PC-9 (cell line): ENCODE measurements at regions of chr7 and their contacts with region 1.

Region 1: GRCh38 chr7:143299840-143300239 is 11.7 kb downstream of the CASP2 start:
- DNase-seq: peak in 1 of 2 experiments; percentile 49
- H3K4me3 ChIP-seq: no peak overlapping the region
- H3K27ac ChIP-seq: no peak overlapping the region
- H3K4me1 ChIP-seq: no peaks in the 10 kb centered on the region
- H3K27me3 ChIP-seq: no peaks in the 10 kb centered on the region
- CTCF ChIP-seq: peak; percentile 82

Region 2: DNA sequence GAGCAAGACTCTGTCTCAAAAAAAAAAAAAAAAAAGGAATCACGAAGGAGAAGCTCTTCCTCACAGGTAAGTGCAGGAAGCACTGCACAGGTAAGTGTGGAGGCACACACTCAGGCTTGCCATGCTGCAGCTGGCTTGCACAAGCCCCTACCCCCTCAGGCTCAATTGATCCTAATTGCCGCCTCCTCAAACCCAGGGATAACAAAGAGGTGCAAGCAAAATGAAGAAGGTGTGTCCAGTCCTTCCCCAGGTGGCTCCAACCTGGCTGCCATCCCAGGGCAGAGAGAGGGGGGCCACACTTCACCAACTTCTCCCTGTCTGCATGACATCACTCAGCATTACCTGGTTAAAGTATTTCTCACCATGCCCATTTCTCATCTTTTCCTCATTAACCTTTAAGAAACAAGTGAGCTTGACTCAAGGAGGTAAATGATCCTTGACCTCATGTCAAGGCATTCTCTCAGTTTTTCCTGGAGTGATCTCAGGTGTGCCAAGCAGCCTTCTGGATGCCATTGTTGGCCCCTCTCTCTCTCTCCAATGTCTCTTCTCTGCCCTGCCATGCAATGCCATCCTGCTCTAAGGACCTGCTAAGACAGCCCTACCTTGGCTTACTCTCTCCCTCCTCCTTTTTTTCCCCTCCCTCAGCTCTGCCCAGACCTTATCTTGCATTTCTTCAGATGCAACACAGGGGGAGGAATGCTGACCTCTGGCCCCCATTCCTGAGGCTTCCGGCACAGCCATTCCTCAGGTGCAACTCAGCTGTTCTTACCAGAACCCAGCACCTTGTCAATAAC is 401.3 kb before region 1 on chr7:
- CTCF ChIA-PET with region 1: no interaction called
- POLR2A ChIA-PET with region 1: interaction called, 10 read pairs
- intact Hi-C with region 1: no loop called
- DNase-seq: peak; percentile 66 to 68
- H3K4me3 ChIP-seq: no peak overlapping the region
- H3K27ac ChIP-seq: no peak overlapping the region
- H3K4me1 ChIP-seq: peaks cover 28% of the 10 kb centered on the region
- H3K27me3 ChIP-seq: no peaks in the 10 kb centered on the region
- CTCF ChIP-seq: no peak

Region 3: DNA sequence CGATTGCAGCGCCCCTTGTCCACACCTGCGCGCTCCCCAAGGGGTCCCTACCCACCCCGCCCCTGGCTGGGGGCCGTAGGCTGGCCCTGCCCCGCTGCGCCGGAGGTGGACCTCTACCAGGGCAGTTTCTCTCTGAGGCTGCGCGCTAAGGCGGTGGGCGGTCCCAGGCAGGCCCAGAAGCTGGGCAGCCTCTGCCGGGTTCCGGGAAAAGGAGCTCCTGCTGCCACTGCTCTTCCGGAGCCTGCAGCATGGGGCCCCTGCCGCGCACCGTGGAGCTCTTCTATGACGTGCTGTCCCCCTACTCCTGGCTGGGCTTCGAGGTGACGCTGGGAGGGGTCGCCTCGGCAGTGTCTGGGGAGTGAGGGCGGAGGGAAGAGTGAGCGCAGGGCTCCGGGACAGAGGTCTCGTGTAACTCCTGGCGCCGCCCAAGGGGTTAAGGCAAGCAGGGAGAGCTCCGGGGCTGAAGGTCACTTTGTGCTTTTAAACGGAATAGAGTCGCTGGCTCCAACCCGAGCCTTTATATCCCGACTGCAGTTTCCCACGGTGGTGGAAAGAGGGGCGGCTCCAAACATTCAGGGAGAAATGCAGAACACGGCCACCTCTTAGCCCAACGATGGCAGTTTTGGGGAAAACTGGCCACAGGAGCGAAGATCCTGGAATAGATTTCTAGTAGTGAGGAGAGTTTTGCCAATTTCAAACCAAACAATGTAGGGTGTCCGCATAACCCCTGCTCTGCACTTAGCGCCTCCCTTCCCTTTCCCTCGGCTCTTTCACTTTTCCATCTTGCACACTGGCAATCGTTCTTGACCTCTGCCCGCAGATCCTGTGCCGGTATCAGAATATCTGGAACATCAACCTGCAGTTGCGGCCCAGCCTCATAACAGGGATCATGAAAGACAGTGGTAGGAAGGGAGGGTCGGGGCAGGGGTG is 36.3 kb before region 1 on chr7 and contains the start of gene GSTK1:
- CTCF ChIA-PET with region 1: interaction called, 13 read pairs
- POLR2A ChIA-PET with region 1: interaction called, 7 read pairs
- intact Hi-C with region 1: no loop called
- DNase-seq: peak; percentile 68 to 81
- H3K4me3 ChIP-seq: peak within 1 kb of the TSS; percentile 90
- H3K27ac ChIP-seq: peak within 1 kb of the TSS; percentile 36
- H3K4me1 ChIP-seq: peaks cover 48% of the 10 kb centered on the region
- H3K27me3 ChIP-seq: no peaks in the 10 kb centered on the region
- CTCF ChIP-seq: no peak
- total RNA-seq, gene GSTK1: 239 and 244 TPM in 2 replicates

Region 4: DNA sequence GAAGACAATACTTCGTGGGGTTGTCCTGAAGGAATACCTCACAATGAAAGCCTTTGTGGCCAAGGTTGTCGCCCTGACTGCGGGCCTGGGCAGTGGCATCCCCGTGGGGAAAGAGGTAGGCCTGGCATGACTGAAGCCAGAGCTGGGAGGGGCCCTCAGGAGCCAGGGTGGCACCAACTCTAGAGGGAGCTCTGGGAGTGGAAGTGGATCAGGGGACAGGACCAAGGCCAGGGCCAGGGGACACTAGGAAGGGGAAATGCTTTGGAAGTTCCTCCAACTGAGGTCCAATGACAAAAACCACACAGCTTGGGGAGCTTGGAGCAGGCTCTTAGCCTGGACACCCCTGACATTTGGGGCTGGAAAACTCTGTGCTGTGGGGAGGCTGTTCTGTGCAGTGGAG is 21.9 kb after region 1 on chr7:
- CTCF ChIA-PET with region 1: no interaction called
- POLR2A ChIA-PET with region 1: interaction called, 21 read pairs
- intact Hi-C with region 1: no loop called
- DNase-seq: peak in 1 of 2 experiments; percentile 37
- H3K4me3 ChIP-seq: no peak overlapping the region
- H3K27ac ChIP-seq: no peak overlapping the region
- H3K4me1 ChIP-seq: peaks cover 6% of the 10 kb centered on the region; the same call in 1 of the 2 replicates
- H3K27me3 ChIP-seq: no peaks in the 10 kb centered on the region
- CTCF ChIP-seq: no peak; the same call in 1 of the 2 replicates

Region 5: DNA sequence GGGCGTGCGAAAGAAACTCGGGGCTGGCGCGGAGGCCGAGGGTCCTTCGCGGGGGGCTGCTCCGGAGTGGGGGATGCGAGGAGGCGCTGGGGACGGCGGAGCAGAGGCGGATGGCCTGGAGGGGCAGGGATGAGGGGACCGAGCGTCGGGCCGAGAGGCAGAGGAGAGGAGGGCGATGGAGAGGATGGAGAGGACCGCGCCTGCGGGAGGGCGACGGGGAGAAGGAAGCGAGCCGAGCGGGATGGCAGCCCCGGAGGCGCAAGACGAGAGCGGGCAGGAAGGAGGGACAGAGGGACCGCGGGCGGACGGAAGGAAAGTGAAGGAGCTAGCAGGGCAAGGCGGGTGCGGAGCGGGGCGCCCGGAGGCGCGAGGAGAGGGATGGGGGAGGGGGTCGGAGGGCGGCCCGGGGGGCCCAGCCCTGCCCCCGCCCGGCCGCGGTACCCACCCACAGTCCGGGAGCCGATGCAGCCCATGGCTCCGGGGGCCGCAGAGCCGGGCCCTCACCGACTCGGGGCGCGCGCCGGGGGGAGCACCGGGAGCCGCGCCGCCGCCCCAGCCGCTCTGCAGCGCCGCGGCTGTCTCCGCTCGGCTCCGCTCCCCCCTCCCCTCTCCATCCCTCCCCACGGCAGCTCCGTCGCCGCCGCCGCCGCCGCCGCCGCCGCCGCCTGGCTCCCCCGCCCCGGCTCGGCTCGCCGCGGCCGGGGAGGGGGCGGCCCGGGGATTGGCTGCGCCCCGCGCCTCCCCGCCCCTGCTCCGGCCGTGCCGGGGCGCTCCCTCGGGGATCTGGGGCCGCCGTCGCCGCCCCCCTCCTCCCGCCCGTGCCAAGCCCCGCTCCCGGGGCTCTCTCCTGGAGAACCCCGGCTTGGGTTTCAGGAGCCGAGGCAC is 62.5 kb after region 1 on chr7 and contains the start of gene FAM131B:
- CTCF ChIA-PET with region 1: no interaction called
- POLR2A ChIA-PET with region 1: interaction called, 16 read pairs
- intact Hi-C with region 1: no loop called
- DNase-seq: no peak
- H3K4me3 ChIP-seq: peak within 1 kb of the TSS; percentile 76
- H3K27ac ChIP-seq: no peak within 1 kb of the TSS
- H3K4me1 ChIP-seq: peaks cover 11% of the 10 kb centered on the region
- H3K27me3 ChIP-seq: peaks cover 60% of the 10 kb centered on the region
- CTCF ChIP-seq: no peak
- total RNA-seq, gene FAM131B: 0.65 and 0.80 TPM in 2 replicates

Region 6: DNA sequence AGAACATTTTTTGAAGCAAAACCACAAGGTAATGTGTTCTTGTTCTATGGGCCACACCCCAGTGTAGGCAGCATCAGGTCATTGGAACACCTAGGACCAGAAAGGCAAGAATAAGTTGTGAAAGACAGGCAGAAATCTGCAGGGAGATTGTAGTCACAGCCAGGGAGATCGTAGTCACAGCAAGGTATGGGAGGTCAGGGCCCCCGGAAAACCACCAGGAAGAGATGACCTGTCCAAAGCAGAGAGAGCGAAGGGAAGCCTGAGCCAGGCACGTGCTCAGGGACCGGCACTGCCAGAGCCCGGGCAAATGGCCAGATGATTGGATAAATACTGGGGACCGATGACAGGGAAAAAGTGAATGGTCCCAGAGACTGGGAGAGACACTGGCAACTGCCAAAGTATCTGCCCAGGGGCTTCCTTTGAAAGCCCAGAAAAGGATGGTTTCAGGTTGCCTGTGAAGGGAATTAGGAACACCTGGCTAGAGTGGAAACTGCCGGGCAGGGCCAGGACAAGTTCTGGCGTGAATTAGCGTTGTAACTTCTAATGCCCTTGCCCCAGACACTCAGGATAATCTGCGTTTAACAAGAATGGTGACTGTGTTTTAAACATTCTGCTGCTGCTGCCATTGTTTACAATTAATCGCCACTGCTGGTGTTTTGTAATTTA is 1107.6 kb after region 1 on chr7:
- CTCF ChIA-PET with region 1: no interaction called
- POLR2A ChIA-PET with region 1: no interaction called
- intact Hi-C with region 1: no loop called
- DNase-seq: peak; percentile 33 to 79
- H3K4me3 ChIP-seq: no peak overlapping the region
- H3K27ac ChIP-seq: no peak overlapping the region
- H3K4me1 ChIP-seq: peaks cover 14% of the 10 kb centered on the region
- H3K27me3 ChIP-seq: peaks cover 2% of the 10 kb centered on the region; the same call in 1 of the 2 replicates
- CTCF ChIP-seq: no peak